ENCODE measurements at regions of chr21 and their contacts with region 1.

Region 1: GRCh38 chr21:40385892-40386599 is 460.9 kb downstream of the DSCAM start:
- DNase-seq: peak; percentile 71
- ATAC-seq: peak; percentile 76

Region 2: GRCh38 chr21:39976800-39977199 is 409.2 kb before region 1 on chr21:
- intact Hi-C with region 1: no loop called
- DNase-seq: no peak
- ATAC-seq: no peak

Region 3: GRCh38 chr21:40143822-40144525 is 242.1 kb before region 1 on chr21:
- intact Hi-C with region 1: loop called (anchors 5 kb)
- DNase-seq: peak; percentile 40
- ATAC-seq: peak; percentile 55